GM12878 (cell line): ENCODE measurements at regions of chr6 and their contacts with region 1.

Region 1: GRCh38 chr6:137944793-137945498 is 77.9 kb downstream of the TNFAIP3 start:
- DNase-seq: no peak
- ATAC-seq: peak; percentile 72
- H3K4me3 ChIP-seq: peak overlapping the region; percentile 37; the same call in 1 of the 2 replicates
- H3K27ac ChIP-seq: peak overlapping the region; percentile 42
- H3K4me1 ChIP-seq: peaks cover 37% of the 10 kb centered on the region
- H3K27me3 ChIP-seq: no peaks in the 10 kb centered on the region
- CTCF ChIP-seq: peak; percentile 75 to 80 (median 75)
- EP300 ChIP-seq: no peak
- POLR2A ChIP-seq: no peak
- RAD21 ChIP-seq: peak; percentile 83

Region 2: GRCh38 chr6:137661601-137662000 is 283.3 kb before region 1 on chr6:
- CTCF ChIA-PET with region 1: interaction called, 18 read pairs
- POLR2A ChIA-PET with region 1: no interaction called
- RAD21 ChIA-PET with region 1: interaction called, 8 read pairs
- SMC1A ChIA-PET with region 1: interaction called, 6 read pairs
- in situ Hi-C with region 1: no loop called
- intact Hi-C with region 1: no loop called
- DNase-seq: no peak
- ATAC-seq: peak; percentile 69
- H3K4me3 ChIP-seq: no peak overlapping the region
- H3K27ac ChIP-seq: no peak overlapping the region
- H3K4me1 ChIP-seq: peaks cover 5% of the 10 kb centered on the region; the same call in 1 of the 2 replicates
- H3K27me3 ChIP-seq: no peaks in the 10 kb centered on the region
- CTCF ChIP-seq: peak; percentile 51 to 75 (median 68)
- EP300 ChIP-seq: no peak
- POLR2A ChIP-seq: no peak
- RAD21 ChIP-seq: peak; percentile 66

Region 3: DNA sequence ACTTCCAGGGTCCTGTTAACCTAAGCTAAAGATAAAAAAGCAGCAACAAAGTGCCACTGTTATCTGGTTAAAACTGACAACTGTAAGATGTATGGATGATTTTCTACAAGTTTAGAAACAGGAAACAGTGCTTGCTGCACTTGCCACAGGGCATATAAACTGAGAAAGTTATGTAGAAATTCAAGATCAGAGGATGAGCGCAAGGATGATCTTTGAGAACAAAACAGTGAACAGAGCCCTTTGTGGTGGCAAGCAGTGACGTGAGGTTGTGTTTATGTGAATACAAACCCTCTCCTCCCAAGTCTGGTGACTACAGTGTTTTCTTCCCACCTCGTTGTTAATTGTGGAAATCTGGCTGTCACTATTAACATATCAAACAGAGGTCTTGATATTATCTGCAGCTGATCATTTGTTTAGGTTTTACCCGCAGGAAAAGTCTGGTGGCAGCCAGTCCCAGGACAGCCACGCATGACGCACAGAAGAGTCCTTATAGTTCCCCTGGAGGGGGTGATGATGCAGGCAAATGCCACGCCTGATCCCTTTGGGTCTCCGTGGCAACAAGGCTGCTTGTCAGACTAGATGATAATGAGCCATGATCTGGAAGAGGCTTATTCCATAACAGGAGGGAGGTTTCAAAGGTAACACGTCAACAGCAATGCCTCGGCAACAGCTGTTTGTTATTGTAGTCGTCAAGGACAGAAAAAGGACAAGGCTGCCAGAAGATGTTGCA is 121.0 kb before region 1 on chr6:
- CTCF ChIA-PET with region 1: interaction called, 7 read pairs
- POLR2A ChIA-PET with region 1: no interaction called
- RAD21 ChIA-PET with region 1: interaction called, 10 read pairs
- SMC1A ChIA-PET with region 1: no interaction called
- in situ Hi-C with region 1: no loop called
- intact Hi-C with region 1: no loop called
- DNase-seq: no peak
- ATAC-seq: peak; percentile 21
- H3K4me3 ChIP-seq: no peak overlapping the region
- H3K27ac ChIP-seq: no peak overlapping the region; the same call in 1 of the 2 replicates
- H3K4me1 ChIP-seq: peaks cover 32% of the 10 kb centered on the region
- H3K27me3 ChIP-seq: no peaks in the 10 kb centered on the region
- CTCF ChIP-seq: no peak
- EP300 ChIP-seq: no peak
- POLR2A ChIP-seq: no peak
- RAD21 ChIP-seq: no peak

Region 4: DNA sequence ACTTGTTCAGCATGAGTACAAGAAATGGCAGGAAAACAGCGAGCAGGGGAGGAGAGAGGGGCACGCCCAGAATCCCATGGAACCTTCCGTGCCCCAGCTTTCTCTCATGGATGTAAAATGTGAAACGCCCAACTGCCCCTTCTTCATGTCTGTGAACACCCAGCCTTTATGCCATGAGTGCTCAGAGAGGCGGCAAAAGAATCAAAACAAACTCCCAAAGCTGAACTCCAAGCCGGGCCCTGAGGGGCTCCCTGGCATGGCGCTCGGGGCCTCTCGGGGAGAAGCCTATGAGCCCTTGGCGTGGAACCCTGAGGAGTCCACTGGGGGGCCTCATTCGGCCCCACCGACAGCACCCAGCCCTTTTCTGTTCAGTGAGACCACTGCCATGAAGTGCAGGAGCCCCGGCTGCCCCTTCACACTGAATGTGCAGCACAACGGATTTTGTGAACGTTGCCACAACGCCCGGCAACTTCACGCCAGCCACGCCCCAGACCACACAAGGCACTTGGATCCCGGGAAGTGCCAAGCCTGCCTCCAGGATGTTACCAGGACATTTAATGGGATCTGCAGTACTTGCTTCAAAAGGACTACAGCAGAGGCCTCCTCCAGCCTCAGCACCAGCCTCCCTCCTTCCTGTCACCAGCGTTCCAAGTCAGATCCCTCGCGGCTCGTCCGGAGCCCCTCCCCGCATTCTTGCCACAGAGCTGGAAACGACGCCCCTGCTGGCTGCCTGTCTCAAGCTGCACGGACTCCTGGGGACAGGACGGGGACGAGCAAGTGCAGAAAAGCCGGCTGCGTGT is 66.3 kb before region 1 on chr6:
- CTCF ChIA-PET with region 1: interaction called, 712 read pairs
- POLR2A ChIA-PET with region 1: interaction called, 42 read pairs
- RAD21 ChIA-PET with region 1: interaction called, 774 read pairs
- SMC1A ChIA-PET with region 1: interaction called, 1,237 read pairs
- in situ Hi-C with region 1: no loop called
- intact Hi-C with region 1: no loop called
- DNase-seq: no peak
- ATAC-seq: peak; percentile 4; the same call in 2 of the 3 replicates
- H3K4me3 ChIP-seq: peak overlapping the region; percentile 56; the same call in 1 of the 2 replicates
- H3K27ac ChIP-seq: peak overlapping the region; percentile 9; the same call in 1 of the 2 replicates
- H3K4me1 ChIP-seq: peaks cover 10% of the 10 kb centered on the region; the same call in 1 of the 2 replicates
- H3K27me3 ChIP-seq: no peaks in the 10 kb centered on the region
- CTCF ChIP-seq: no peak; a peak in 2 of 6 replicates
- EP300 ChIP-seq: no peak
- POLR2A ChIP-seq: peak; percentile 53; the same call in 1 of the 2 replicates
- RAD21 ChIP-seq: no peak

Region 5: DNA sequence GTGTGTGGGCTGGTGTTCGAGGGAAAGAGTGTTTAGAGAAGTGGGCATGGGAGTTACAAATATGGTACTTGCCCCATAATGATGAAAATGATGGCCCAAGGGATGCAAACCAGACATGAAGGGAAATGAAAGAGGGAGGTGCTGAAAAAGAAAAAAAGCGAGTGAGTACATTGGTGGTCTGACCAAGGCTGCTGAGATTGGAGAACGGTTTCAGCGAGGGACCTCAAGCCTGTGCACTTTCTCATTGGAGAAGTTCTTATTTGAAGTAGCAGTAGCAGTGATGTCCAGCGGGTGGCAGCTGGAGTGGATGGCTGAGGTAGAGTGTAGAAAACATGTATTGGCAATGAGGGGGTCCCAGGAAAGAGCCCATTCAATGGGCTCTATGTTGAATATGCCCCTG is 23.1 kb before region 1 on chr6:
- CTCF ChIA-PET with region 1: interaction called, 102 read pairs
- POLR2A ChIA-PET with region 1: interaction called, 26 read pairs
- RAD21 ChIA-PET with region 1: interaction called, 57 read pairs
- SMC1A ChIA-PET with region 1: interaction called, 111 read pairs
- in situ Hi-C with region 1: no loop called
- intact Hi-C with region 1: loop called (anchors 1 kb)
- DNase-seq: no peak
- ATAC-seq: peak; percentile 61
- H3K4me3 ChIP-seq: no peak overlapping the region
- H3K27ac ChIP-seq: peak overlapping the region; percentile 33; the same call in 1 of the 2 replicates
- H3K4me1 ChIP-seq: peaks cover 65% of the 10 kb centered on the region
- H3K27me3 ChIP-seq: no peaks in the 10 kb centered on the region
- CTCF ChIP-seq: peak; percentile 16 to 33 (median 22); a peak in 3 of 6 replicates
- EP300 ChIP-seq: no peak
- POLR2A ChIP-seq: no peak
- RAD21 ChIP-seq: peak; percentile 51

Region 6: DNA sequence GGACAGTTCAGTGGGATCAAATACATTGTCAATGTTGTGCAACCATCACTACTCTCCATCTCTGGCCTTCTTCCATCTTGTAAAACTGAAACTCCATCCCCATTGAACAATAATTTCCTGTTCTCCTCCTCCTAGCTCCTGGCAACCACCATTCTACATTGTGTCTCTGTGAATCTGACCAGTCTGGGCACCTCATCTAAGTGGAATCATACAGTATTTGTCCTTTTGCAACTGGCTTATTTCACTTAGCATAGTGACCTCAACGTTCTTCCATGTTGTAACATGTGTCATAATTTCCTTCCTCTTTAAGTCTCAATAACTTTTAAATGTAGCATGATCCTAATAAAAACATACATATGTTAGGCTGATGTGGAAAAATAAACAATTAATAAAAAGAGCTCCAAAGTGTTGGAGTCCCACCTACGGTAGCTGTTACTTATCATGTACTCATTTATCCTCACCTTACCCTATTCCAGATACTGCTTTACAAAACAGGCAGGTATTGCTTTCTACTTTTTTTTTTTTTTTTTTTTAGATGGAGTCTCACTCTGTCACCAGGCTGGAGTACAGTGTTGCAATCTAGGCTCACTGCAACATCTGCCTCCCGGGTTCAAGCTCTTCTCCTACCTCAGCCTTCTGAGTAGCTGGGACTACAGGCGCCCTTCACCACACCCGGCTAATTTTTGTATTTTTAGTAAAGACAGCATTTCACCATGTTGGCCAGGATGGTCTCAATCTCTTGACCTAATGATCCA is 14.0 kb after region 1 on chr6:
- CTCF ChIA-PET with region 1: interaction called, 18 read pairs
- POLR2A ChIA-PET with region 1: interaction called, 5 read pairs
- RAD21 ChIA-PET with region 1: interaction called, 6 read pairs
- SMC1A ChIA-PET with region 1: interaction called, 112 read pairs
- in situ Hi-C with region 1: no loop called
- intact Hi-C with region 1: no loop called
- DNase-seq: no peak
- ATAC-seq: no peak
- H3K4me3 ChIP-seq: no peak overlapping the region
- H3K27ac ChIP-seq: no peak overlapping the region
- H3K4me1 ChIP-seq: no peaks in the 10 kb centered on the region
- H3K27me3 ChIP-seq: no peaks in the 10 kb centered on the region
- CTCF ChIP-seq: no peak
- EP300 ChIP-seq: no peak
- POLR2A ChIP-seq: no peak
- RAD21 ChIP-seq: no peak

Region 7: GRCh38 chr6:138001750-138002349 is 56.9 kb after region 1 on chr6:
- CTCF ChIA-PET with region 1: interaction called, 296 read pairs
- POLR2A ChIA-PET with region 1: interaction called, 3 read pairs
- RAD21 ChIA-PET with region 1: interaction called, 151 read pairs
- SMC1A ChIA-PET with region 1: interaction called, 199 read pairs
- in situ Hi-C with region 1: no loop called
- intact Hi-C with region 1: loop called (anchors 1 kb)
- DNase-seq: no peak
- ATAC-seq: peak; percentile 62
- H3K4me3 ChIP-seq: no peak overlapping the region
- H3K27ac ChIP-seq: no peak overlapping the region
- H3K4me1 ChIP-seq: no peaks in the 10 kb centered on the region
- H3K27me3 ChIP-seq: no peaks in the 10 kb centered on the region
- CTCF ChIP-seq: peak; percentile 73 to 91 (median 85)
- EP300 ChIP-seq: no peak
- POLR2A ChIP-seq: no peak
- RAD21 ChIP-seq: peak; percentile 89

Region 8: DNA sequence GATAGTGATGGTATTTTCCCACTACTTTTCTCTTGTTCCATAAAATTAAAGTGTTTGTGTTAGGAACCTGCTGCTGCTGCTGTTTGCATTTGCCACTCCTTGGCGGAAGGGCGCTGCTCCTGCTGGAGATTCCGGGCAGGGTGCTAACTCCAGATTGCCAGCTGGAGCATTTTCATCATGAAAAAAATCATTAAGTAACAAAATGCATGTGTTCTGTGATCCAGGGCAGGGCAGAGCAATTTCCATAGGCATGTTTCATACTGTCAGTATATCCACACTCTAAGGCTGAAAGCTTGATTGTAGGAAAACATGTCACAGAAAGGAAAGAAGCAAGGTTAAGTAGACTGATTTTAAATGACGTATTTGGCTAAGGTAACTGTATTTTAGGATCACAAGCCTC is 249.3 kb after region 1 on chr6:
- CTCF ChIA-PET with region 1: no interaction called
- POLR2A ChIA-PET with region 1: no interaction called
- RAD21 ChIA-PET with region 1: no interaction called
- SMC1A ChIA-PET with region 1: no interaction called
- in situ Hi-C with region 1: no loop called
- intact Hi-C with region 1: no loop called
- DNase-seq: no peak
- ATAC-seq: no peak
- H3K4me3 ChIP-seq: no peak overlapping the region
- H3K27ac ChIP-seq: no peak overlapping the region
- H3K4me1 ChIP-seq: no peaks in the 10 kb centered on the region
- H3K27me3 ChIP-seq: no peaks in the 10 kb centered on the region; a peak in 2 of 4 replicates
- CTCF ChIP-seq: no peak
- EP300 ChIP-seq: no peak
- POLR2A ChIP-seq: no peak
- RAD21 ChIP-seq: no peak